ENCODE measurements at regions of chr14 and their contacts with region 1.

Region 1: GRCh38 chr14:73825551-73826188 is 26.0 kb upstream of the PTGR2 start:
- DNase-seq: peak; percentile 90
- H3K4me3 Mint-ChIP-seq: no peak overlapping the region
- H3K27ac Mint-ChIP-seq: no peak overlapping the region
- H3K4me1 Mint-ChIP-seq: peaks cover 14% of the 10 kb centered on the region
- H3K27me3 Mint-ChIP-seq: no peaks in the 10 kb centered on the region

Region 2: GRCh38 chr14:73741386-73741875 is 84.2 kb before region 1 on chr14:
- CTCF ChIA-PET with region 1: interaction called, 21 read pairs
- intact Hi-C with region 1: loop called (anchors 5 kb)
- DNase-seq: peak; percentile 88
- H3K4me3 Mint-ChIP-seq: peak overlapping the region; percentile 43
- H3K27ac Mint-ChIP-seq: peak overlapping the region; percentile 84
- H3K4me1 Mint-ChIP-seq: peaks cover 63% of the 10 kb centered on the region
- H3K27me3 Mint-ChIP-seq: no peaks in the 10 kb centered on the region

Region 3: GRCh38 chr14:73753959-73754882 is 71.4 kb before region 1 on chr14:
- CTCF ChIA-PET with region 1: interaction called, 15 read pairs
- intact Hi-C with region 1: no loop called
- DNase-seq: peak; percentile 85
- H3K4me3 Mint-ChIP-seq: peak overlapping the region; percentile 91
- H3K27ac Mint-ChIP-seq: peak overlapping the region; percentile 95
- H3K4me1 Mint-ChIP-seq: peaks cover 88% of the 10 kb centered on the region
- H3K27me3 Mint-ChIP-seq: no peaks in the 10 kb centered on the region

Region 4: GRCh38 chr14:73886449-73887317 is 61.0 kb after region 1 on chr14 and contains the start of gene ZNF410:
- CTCF ChIA-PET with region 1: no interaction called
- intact Hi-C with region 1: loop called (anchors 1 kb)
- DNase-seq: peak; percentile 95
- H3K4me3 Mint-ChIP-seq: peak within 1 kb of the TSS; percentile 88
- H3K27ac Mint-ChIP-seq: peak within 1 kb of the TSS; percentile 94
- H3K4me1 Mint-ChIP-seq: peaks cover 46% of the 10 kb centered on the region
- H3K27me3 Mint-ChIP-seq: no peaks in the 10 kb centered on the region
- total RNA-seq, gene ZNF410: 51.0 to 56.8 TPM

Region 5: GRCh38 chr14:74038015-74038859 is 212.6 kb after region 1 on chr14:
- CTCF ChIA-PET with region 1: no interaction called
- intact Hi-C with region 1: loop called (anchors 1 kb)
- DNase-seq: peak; percentile 8
- H3K4me3 Mint-ChIP-seq: no peak overlapping the region
- H3K27ac Mint-ChIP-seq: no peak overlapping the region
- H3K4me1 Mint-ChIP-seq: no peaks in the 10 kb centered on the region
- H3K27me3 Mint-ChIP-seq: no peaks in the 10 kb centered on the region

Region 6: GRCh38 chr14:74249433-74250375 is 424.0 kb after region 1 on chr14:
- CTCF ChIA-PET with region 1: no interaction called
- intact Hi-C with region 1: loop called (anchors 5 kb)
- DNase-seq: no peak
- H3K4me3 Mint-ChIP-seq: no peak overlapping the region
- H3K27ac Mint-ChIP-seq: no peak overlapping the region
- H3K4me1 Mint-ChIP-seq: peaks cover 6% of the 10 kb centered on the region
- H3K27me3 Mint-ChIP-seq: peaks cover 26% of the 10 kb centered on the region